Activated CD4-positive, alpha-beta T cell treated with anti-CD3 and anti-CD28 coated beads for 36 hours (primary cell): ENCODE measurements at regions of chr7 and their contacts with region 1.

Region 1: GRCh38 chr7:112206238-112207044 is at the starts of genes DOCK4 and ZNF277:
- DNase-seq: peak; percentile 100
- ATAC-seq: peak; percentile 94
- H3K4me3 Mint-ChIP-seq: peak within 1 kb of the TSS; percentile 92
- H3K27ac Mint-ChIP-seq: peak within 1 kb of the TSS; percentile 84
- H3K4me1 Mint-ChIP-seq: peaks cover 34% of the 10 kb centered on the region
- H3K27me3 Mint-ChIP-seq: peaks cover 30% of the 10 kb centered on the region
- total RNA-seq, gene DOCK4: 0.32 TPM
- total RNA-seq, gene ZNF277: 17.6 to 21.4 TPM

Region 2: DNA sequence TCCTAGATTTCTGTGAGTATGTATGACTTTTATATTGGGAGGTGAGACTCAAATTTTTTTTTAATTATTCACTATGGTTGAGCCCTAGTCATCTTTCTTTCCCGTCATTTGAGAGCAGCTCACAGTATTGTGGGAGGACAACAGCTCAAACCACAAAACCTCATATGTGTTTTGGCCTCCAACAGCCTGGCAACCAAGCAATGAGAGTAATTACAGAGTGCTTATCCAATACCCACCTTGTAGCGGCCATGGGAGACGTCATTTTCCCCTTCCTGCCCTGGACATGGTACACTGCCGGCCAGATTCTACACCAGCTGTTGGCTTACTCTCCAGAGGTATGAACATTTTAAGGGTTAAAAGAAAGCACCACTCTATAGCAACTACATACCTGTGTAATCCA is 49.4 kb before region 1 on chr7:
- CTCF ChIA-PET with region 1: no interaction called
- POLR2A ChIA-PET with region 1: no interaction called
- intact Hi-C with region 1: no loop called
- DNase-seq: peak; percentile 11
- ATAC-seq: peak; percentile 30
- H3K4me3 Mint-ChIP-seq: no peak overlapping the region
- H3K27ac Mint-ChIP-seq: no peak overlapping the region
- H3K4me1 Mint-ChIP-seq: no peaks in the 10 kb centered on the region
- H3K27me3 Mint-ChIP-seq: peaks cover 9% of the 10 kb centered on the region

Region 3: GRCh38 chr7:112390167-112390566 is 183.7 kb after region 1 on chr7:
- CTCF ChIA-PET with region 1: no interaction called
- POLR2A ChIA-PET with region 1: no interaction called
- intact Hi-C with region 1: loop called (anchors 1 to 2 kb)
- DNase-seq: no peak
- ATAC-seq: no peak
- H3K4me3 Mint-ChIP-seq: no peak overlapping the region
- H3K27ac Mint-ChIP-seq: no peak overlapping the region
- H3K4me1 Mint-ChIP-seq: peaks cover 9% of the 10 kb centered on the region
- H3K27me3 Mint-ChIP-seq: no peaks in the 10 kb centered on the region

Region 4: GRCh38 chr7:112939574-112940314 is 733.3 kb after region 1 on chr7:
- CTCF ChIA-PET with region 1: no interaction called
- POLR2A ChIA-PET with region 1: no interaction called
- intact Hi-C with region 1: loop called (anchors 1 to 5 kb)
- DNase-seq: peak; percentile 99
- ATAC-seq: peak; percentile 97
- H3K4me3 Mint-ChIP-seq: peak overlapping the region; percentile 80
- H3K27ac Mint-ChIP-seq: peak overlapping the region; percentile 96
- H3K4me1 Mint-ChIP-seq: peaks cover 28% of the 10 kb centered on the region
- H3K27me3 Mint-ChIP-seq: no peaks in the 10 kb centered on the region

Region 5: GRCh38 chr7:113118074-113118959 is 911.9 kb after region 1 on chr7 and contains the start of gene SMIM30:
- CTCF ChIA-PET with region 1: no interaction called
- POLR2A ChIA-PET with region 1: no interaction called
- intact Hi-C with region 1: loop called in 1 of 2 experiments (anchors 2 kb)
- DNase-seq: peak; percentile 93
- ATAC-seq: peak; percentile 95
- H3K4me3 Mint-ChIP-seq: peak within 1 kb of the TSS; percentile 80
- H3K27ac Mint-ChIP-seq: peak within 1 kb of the TSS; percentile 82
- H3K4me1 Mint-ChIP-seq: peaks cover 34% of the 10 kb centered on the region
- H3K27me3 Mint-ChIP-seq: no peaks in the 10 kb centered on the region
- total RNA-seq, gene SMIM30: 36.0 to 38.5 TPM